ENCODE measurements at regions of chr4 and their contacts with region 1.

Region 1: DNA sequence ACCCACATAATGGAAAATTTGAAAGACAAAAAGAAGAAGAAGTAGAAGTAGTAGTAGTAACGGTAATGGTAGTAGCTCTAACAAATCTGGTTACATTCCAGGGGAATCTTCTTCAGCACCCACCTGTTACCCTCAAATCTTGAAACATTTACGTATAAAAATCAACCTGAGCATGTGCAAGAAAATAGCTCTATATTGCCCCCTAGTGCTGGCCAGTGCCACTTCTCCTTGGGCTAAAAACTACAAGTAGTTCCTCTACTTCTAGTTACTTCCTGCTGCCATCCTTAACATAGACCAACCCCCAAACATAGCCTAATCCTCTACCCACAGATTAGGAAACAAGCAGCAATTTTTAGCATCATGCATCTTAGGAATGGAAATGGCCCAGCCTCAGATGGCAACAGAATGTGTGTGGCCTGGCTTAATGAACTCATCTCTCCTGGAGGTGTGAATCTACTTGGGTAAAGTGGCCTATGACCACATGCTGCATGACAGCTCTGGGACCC is 3.1 kb downstream of the PDGFC start:
- DNase-seq: peak; percentile 57 to 68
- H3K4me3 ChIP-seq: no peak overlapping the region
- H3K4me3 Mint-ChIP-seq: peak overlapping the region; percentile 45
- H3K27ac Mint-ChIP-seq: no peak overlapping the region
- H3K4me1 ChIP-seq: peaks cover 6% of the 10 kb centered on the region; the same call in 1 of the 2 replicates
- H3K4me1 Mint-ChIP-seq: peaks cover 11% of the 10 kb centered on the region
- H3K27me3 ChIP-seq: no peaks in the 10 kb centered on the region
- H3K27me3 Mint-ChIP-seq: no peaks in the 10 kb centered on the region
- CTCF ChIP-seq: peak; percentile 76 to 77

Region 2: DNA sequence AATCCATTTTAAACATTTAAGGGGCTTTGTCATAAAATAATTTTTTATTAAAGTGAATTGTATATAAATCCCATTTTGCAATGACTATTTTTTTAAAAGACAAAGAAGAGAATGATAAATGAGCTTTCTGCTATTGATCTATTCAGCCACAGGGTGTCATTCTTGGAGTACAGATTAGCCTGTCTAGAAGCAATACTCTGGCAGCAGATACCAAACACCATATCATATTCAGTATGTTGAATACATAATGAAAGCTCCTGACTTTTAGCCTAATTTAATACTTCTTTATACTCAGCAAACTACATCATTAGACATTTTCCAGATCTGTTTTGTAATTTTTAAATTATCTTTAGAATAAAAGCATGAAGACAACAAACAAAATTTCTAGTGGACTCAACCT is 493.2 kb before region 1 on chr4:
- CTCF ChIA-PET with region 1: interaction called, 6 read pairs
- POLR2A ChIA-PET with region 1: no interaction called
- intact Hi-C with region 1: loop called (anchors 1 kb)
- DNase-seq: peak in 1 of 2 experiments; percentile 5
- H3K4me3 ChIP-seq: no peak overlapping the region
- H3K4me3 Mint-ChIP-seq: no peak overlapping the region
- H3K27ac Mint-ChIP-seq: no peak overlapping the region
- H3K4me1 ChIP-seq: no peaks in the 10 kb centered on the region
- H3K4me1 Mint-ChIP-seq: no peaks in the 10 kb centered on the region
- H3K27me3 ChIP-seq: no peaks in the 10 kb centered on the region
- H3K27me3 Mint-ChIP-seq: no peaks in the 10 kb centered on the region
- CTCF ChIP-seq: peak; percentile 29 to 46

Region 3: GRCh38 chr4:156677131-156677531 is 291.4 kb before region 1 on chr4:
- CTCF ChIA-PET with region 1: no interaction called
- POLR2A ChIA-PET with region 1: no interaction called
- intact Hi-C with region 1: loop called (anchors 5 kb)
- DNase-seq: peak in 1 of 2 experiments; percentile 33
- H3K4me3 ChIP-seq: no peak overlapping the region
- H3K4me3 Mint-ChIP-seq: no peak overlapping the region
- H3K27ac Mint-ChIP-seq: no peak overlapping the region
- H3K4me1 ChIP-seq: no peaks in the 10 kb centered on the region
- H3K4me1 Mint-ChIP-seq: no peaks in the 10 kb centered on the region
- H3K27me3 ChIP-seq: no peaks in the 10 kb centered on the region
- H3K27me3 Mint-ChIP-seq: peaks cover 4% of the 10 kb centered on the region
- CTCF ChIP-seq: peak; percentile 25 to 43

Region 4: GRCh38 chr4:156765277-156765676 is 203.3 kb before region 1 on chr4:
- CTCF ChIA-PET with region 1: no interaction called
- POLR2A ChIA-PET with region 1: no interaction called
- intact Hi-C with region 1: loop called (anchors 1 kb)
- DNase-seq: no peak
- H3K4me3 ChIP-seq: no peak overlapping the region
- H3K4me3 Mint-ChIP-seq: no peak overlapping the region
- H3K27ac Mint-ChIP-seq: no peak overlapping the region
- H3K4me1 ChIP-seq: no peaks in the 10 kb centered on the region
- H3K4me1 Mint-ChIP-seq: peaks cover 7% of the 10 kb centered on the region
- H3K27me3 ChIP-seq: no peaks in the 10 kb centered on the region
- H3K27me3 Mint-ChIP-seq: no peaks in the 10 kb centered on the region
- CTCF ChIP-seq: no peak

Region 5: DNA sequence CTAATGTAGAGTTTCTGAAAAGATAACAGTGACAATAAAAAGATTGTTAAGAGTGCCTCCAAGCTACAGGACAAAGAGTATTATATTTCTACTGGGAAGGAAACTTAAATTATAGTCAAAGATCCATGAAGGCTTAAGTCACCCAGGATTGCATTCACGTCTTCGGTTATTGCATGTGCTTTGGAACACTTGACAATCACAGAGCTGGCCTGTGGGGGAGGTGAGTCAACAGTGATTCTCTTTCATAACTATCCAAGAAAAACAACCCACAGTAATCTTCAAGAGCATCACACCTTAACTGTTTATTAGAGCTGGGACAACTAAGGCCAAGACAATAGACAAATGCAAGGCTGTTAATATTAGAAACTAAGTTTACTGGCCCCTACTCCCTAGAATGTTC is 37.3 kb before region 1 on chr4:
- CTCF ChIA-PET with region 1: no interaction called
- POLR2A ChIA-PET with region 1: no interaction called
- intact Hi-C with region 1: loop called (anchors 1 kb)
- DNase-seq: peak; percentile 37 to 61
- H3K4me3 ChIP-seq: no peak overlapping the region
- H3K4me3 Mint-ChIP-seq: no peak overlapping the region
- H3K27ac Mint-ChIP-seq: peak overlapping the region; percentile 94
- H3K4me1 ChIP-seq: peaks cover 20% of the 10 kb centered on the region
- H3K4me1 Mint-ChIP-seq: peaks cover 13% of the 10 kb centered on the region
- H3K27me3 ChIP-seq: no peaks in the 10 kb centered on the region
- H3K27me3 Mint-ChIP-seq: no peaks in the 10 kb centered on the region
- CTCF ChIP-seq: no peak

Region 6: GRCh38 chr4:157045507-157046127 is 77.1 kb after region 1 on chr4:
- CTCF ChIA-PET with region 1: interaction called, 7 read pairs
- POLR2A ChIA-PET with region 1: no interaction called
- intact Hi-C with region 1: loop called (anchors 1 kb)
- DNase-seq: peak; percentile 31 to 48
- H3K4me3 ChIP-seq: no peak overlapping the region
- H3K4me3 Mint-ChIP-seq: no peak overlapping the region
- H3K27ac Mint-ChIP-seq: no peak overlapping the region
- H3K4me1 ChIP-seq: no peaks in the 10 kb centered on the region
- H3K4me1 Mint-ChIP-seq: no peaks in the 10 kb centered on the region
- H3K27me3 ChIP-seq: no peaks in the 10 kb centered on the region
- H3K27me3 Mint-ChIP-seq: peaks cover 7% of the 10 kb centered on the region
- CTCF ChIP-seq: peak; percentile 56 to 75

Measured in Caco-2 (cell line).